T-cell (primary cell): ENCODE measurements at regions of chr19 and their contacts with region 1.

Region 1: DNA sequence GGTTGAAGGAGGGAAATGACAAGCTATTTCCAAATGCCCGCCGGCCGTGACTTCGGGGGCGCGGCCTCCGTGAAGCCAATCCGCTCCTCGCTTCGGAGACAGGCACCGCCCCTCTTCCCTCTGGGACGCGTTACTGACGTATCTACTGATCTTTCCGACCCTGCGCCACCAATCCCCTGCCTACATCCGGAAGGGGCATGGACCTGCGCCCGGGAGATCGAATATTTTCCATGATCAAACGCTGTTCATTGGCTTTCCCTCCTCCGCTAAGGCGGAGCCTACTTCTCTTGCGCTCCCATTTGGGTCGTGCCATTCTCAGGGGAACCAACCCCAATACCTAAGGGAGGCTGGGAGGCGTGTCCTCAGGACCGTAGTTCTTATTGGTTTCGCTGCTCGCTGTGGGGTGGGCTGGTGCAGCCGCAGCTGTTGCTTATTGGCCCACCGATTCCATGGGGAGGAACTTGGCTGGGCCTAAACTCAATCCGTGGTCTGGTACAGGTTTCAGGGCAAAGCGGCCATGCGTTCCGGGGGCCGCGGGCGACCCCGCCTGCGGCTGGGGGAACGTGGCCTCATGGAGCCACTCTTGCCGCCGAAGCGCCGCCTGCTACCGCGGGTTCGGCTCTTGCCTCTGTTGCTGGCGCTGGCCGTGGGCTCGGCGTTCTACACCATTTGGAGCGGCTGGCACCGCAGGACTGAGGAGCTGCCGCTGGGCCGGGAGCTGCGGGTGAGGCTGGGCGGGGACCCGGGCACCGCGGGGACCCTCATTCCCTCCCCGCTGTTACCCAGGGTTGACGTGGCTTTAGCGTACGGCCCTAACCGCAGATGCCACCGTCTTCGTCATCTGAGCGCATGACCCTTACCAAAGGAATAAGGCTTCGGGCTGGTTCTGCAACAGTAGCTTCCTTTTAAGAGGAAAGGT is at the start of gene QPCTL:
- DNase-seq: peak; percentile 91 to 99 (median 96)
- ATAC-seq: peak; percentile 87 to 92 (median 90)
- H3K4me3 ChIP-seq: peak within 1 kb of the TSS; percentile 83 to 97
- H3K4me3 Mint-ChIP-seq: peak within 1 kb of the TSS; percentile 94 to 97 (median 96)
- H3K27ac ChIP-seq: peak within 1 kb of the TSS; percentile 92
- H3K27ac Mint-ChIP-seq: peak within 1 kb of the TSS; percentile 93 to 98
- H3K4me1 ChIP-seq: peaks cover 8 to 33% of the 10 kb centered on the region in 2 experiments
- H3K4me1 Mint-ChIP-seq: peaks cover 12 to 27% (median 24%) of the 10 kb centered on the region in 3 donors
- H3K27me3 ChIP-seq: no peaks in the 10 kb centered on the region
- H3K27me3 Mint-ChIP-seq: no peaks in the 10 kb centered on the region
- total RNA-seq, gene QPCTL: 5.4 to 13.7 (median 10.3) TPM

Region 2: GRCh38 chr19:45681391-45682015 is 10.9 kb before region 1 on chr19:
- CTCF ChIA-PET with region 1: interaction called, 11 to 20 read pairs
- POLR2A ChIA-PET with region 1: interaction called in 1 of 2 experiments, 3 read pairs
- DNase-seq: peak; percentile 66 to 93 (median 80)
- ATAC-seq: peak; percentile 76 to 90 (median 87)
- H3K4me3 ChIP-seq: peak overlapping the region in 1 of 2 donors; percentile 38
- H3K4me3 Mint-ChIP-seq: peak overlapping the region; percentile 62 to 73 (median 70)
- H3K27ac ChIP-seq: no peak overlapping the region
- H3K27ac Mint-ChIP-seq: peak overlapping the region in 1 of 2 donors; percentile 66
- H3K4me1 ChIP-seq: peaks cover 0 to 34% of the 10 kb centered on the region in 2 experiments
- H3K4me1 Mint-ChIP-seq: peaks cover 14 to 25% (median 14%) of the 10 kb centered on the region in 3 donors
- H3K27me3 ChIP-seq: peaks cover 0 to 13% of the 10 kb centered on the region in 2 experiments
- H3K27me3 Mint-ChIP-seq: no peaks in the 10 kb centered on the region

Region 3: DNA sequence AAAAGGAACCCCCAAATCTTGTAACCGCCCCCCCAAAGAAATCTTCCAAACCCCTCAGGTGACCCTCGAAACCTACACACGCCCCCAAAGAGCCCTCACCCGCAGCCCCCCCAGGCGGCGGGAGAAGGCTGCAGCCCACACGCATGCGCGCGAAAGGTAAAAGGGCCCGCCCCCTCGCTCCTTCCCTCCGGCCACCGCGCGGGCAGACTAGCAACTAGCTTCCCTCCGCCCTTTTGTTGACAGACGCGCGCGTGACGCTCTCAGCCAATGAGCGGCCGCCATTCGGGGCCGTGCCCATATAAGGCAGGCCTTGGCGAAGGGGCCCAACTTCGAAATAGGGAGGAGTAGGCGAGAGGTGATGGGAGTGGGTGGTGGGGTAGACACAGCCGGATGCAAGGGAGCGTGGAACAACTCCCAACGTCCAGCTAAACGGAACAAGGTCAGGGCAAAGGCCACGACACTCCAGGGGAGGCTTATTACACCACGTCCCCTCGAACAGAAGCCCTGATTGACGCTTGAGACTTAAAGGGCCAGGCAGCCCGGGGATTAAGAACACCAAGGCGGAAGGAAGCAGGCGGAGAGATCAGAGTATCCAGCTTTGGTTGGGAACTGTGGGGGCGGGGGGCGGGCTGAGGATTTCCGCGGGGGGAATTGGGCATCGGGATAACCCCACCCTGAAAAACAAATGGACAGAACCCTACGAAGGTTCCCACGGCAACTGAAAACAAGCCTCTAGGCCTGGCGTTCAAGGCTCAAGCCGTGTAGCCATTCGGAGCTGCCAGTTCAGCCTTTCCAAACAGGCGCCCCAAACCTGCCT is 24.9 kb after region 1 on chr19:
- CTCF ChIA-PET with region 1: interaction called, 7 to 30 read pairs
- POLR2A ChIA-PET with region 1: no interaction called
- DNase-seq: peak; percentile 93 to 99 (median 97)
- ATAC-seq: peak; percentile 94 to 96 (median 94)
- H3K4me3 ChIP-seq: peak overlapping the region; percentile 73 to 82
- H3K4me3 Mint-ChIP-seq: peak overlapping the region; percentile 93 to 98 (median 96)
- H3K27ac ChIP-seq: peak overlapping the region; percentile 88
- H3K27ac Mint-ChIP-seq: peak overlapping the region; percentile 98
- H3K4me1 ChIP-seq: peaks cover 13 to 34% of the 10 kb centered on the region in 2 experiments
- H3K4me1 Mint-ChIP-seq: peaks cover 42 to 47% (median 47%) of the 10 kb centered on the region in 3 donors
- H3K27me3 ChIP-seq: no peaks in the 10 kb centered on the region
- H3K27me3 Mint-ChIP-seq: no peaks in the 10 kb centered on the region

Region 4: DNA sequence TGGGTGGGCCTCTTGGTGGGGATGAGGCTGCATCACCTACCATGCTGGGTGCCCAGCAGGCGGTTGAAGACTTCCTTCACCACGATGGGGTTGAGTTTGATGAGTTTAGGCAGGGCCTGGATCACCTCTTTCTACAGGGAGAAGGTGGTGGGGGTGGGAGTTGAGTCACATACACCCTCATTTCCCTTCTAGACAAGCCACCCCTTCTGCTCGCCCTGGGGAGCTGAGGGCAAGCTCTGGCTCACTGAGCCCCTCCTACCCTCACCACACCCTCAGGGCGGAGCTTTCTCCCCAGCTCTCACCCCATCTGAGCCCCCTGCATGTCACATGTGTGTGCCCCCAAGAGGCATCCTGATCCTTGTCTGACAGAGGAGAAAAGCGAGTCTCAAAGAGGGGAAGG is 130.3 kb after region 1 on chr19:
- CTCF ChIA-PET with region 1: no interaction called
- POLR2A ChIA-PET with region 1: no interaction called
- DNase-seq: no peak
- ATAC-seq: no peak
- H3K4me3 ChIP-seq: no peak overlapping the region
- H3K4me3 Mint-ChIP-seq: no peak overlapping the region
- H3K27ac ChIP-seq: no peak overlapping the region
- H3K27ac Mint-ChIP-seq: no peak overlapping the region
- H3K4me1 ChIP-seq: no peaks in the 10 kb centered on the region
- H3K4me1 Mint-ChIP-seq: no peaks in the 10 kb centered on the region
- H3K27me3 ChIP-seq: no peaks in the 10 kb centered on the region
- H3K27me3 Mint-ChIP-seq: no peaks in the 10 kb centered on the region